ENCODE measurements at regions of chr16 and their contacts with region 1.

Region 1: DNA sequence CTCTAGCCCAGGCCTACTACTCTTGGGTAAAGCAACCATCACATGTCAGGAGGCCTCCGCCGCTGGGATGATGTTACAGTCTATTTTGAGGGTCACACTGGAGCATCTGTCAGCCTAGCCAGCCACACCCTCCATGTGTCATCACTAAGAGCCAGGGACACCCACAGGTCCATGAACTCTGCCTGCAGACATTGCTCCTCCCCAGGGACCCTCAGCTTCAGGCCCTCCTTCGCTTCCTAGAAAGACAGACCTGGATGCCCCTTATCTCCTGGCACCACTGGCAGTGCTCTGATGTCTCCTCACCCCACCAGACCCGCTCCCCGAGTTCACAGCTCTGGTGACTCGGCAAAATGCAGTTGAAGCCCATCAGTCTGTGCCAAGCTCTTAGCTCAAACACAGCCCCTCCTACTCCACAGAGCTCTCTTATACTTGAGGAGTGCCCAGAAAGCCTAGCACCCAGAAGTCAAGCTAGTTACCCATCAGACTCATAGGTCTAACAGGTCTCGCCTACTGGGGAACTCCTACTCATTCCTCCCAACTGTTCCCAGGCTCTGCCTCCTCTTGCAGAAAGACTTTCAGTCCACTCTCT is 5.9 kb downstream of the RANBP10 start:
- DNase-seq: peak; percentile 35 to 71 (median 56)
- ATAC-seq: peak; percentile 79 to 96 (median 86)
- H3K4me3 ChIP-seq: no peak overlapping the region
- H3K27ac ChIP-seq: peak overlapping the region in 5 of 12 donors; percentile 40 to 75 (median 58)
- H3K4me1 ChIP-seq: peaks cover 0 to 50% (median 24%) of the 10 kb centered on the region in 12 donors
- H3K27me3 ChIP-seq: no peaks in the 10 kb centered on the region
- CTCF ChIP-seq: no peak
- POLR2A ChIP-seq: no peak

Region 2: DNA sequence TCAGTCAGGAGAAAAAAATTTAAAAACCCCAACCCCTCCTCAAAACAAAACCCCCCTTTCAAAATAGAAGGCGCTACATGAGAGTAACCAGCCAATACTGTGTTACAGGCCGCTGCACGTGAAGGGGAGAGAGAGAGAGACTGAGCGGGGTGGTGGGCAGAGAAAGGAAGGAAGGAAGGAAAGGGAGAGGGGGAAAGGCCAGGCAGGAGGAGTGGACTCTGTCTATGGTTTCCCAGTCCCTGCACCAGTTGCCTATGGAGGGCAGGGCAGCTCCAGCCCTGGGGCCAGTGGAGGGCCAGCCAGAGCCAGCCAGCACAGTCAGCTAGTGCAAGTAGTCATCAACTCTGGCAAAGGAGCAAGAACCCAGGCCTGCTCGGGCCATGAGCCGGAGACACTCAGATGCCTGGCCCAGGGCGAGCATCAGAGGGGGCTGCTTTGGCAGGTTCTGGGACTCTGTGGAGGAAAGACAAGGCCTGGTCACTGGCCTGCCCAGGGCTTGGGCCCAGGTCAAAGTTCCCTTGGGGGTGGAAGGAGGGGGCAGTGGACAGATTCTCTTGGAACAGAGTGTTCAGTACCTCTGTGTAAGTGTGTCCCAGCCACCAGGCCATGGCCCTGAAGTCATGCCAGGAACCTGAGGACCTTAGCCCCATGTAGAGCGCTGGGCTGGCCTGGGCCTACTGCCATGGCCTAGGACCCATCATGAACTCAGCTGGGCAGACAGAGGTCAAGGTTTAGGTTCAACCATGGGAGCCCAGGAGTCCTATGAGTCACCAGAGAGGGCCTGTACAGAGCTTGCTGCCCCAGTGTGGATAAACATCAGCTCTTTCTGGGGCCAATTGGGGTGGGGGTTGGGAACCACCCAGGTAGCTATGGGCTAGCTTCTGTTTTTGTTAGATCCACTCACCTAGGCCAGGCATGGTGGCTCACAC is 74.1 kb before region 1 on chr16:
- intact Hi-C with region 1: loop called in 3 of 10 experiments (anchors 5 to 10 kb)
- DNase-seq: no peak
- ATAC-seq: no peak
- H3K4me3 ChIP-seq: no peak overlapping the region
- H3K27ac ChIP-seq: no peak overlapping the region
- H3K4me1 ChIP-seq: no peaks in the 10 kb centered on the region
- H3K27me3 ChIP-seq: no peaks in the 10 kb centered on the region
- CTCF ChIP-seq: no peak
- POLR2A ChIP-seq: no peak

Measured in heart left ventricle (tissue), 16 donors.